Activated T-helper 2 cell treated with anti-CD3 and anti-CD28 coated beads, Interferon-gamma antibody, Interleukin-2, Interleukin-4, amounts not matched to agents 10 μg/mL and 5 μg/mL and 100 μg/mL, durations not matched to agents 14 hours and 24 hours and 36 hours (primary cell): ENCODE measurements at regions of chr9 and their contacts with region 1.

Region 1: DNA sequence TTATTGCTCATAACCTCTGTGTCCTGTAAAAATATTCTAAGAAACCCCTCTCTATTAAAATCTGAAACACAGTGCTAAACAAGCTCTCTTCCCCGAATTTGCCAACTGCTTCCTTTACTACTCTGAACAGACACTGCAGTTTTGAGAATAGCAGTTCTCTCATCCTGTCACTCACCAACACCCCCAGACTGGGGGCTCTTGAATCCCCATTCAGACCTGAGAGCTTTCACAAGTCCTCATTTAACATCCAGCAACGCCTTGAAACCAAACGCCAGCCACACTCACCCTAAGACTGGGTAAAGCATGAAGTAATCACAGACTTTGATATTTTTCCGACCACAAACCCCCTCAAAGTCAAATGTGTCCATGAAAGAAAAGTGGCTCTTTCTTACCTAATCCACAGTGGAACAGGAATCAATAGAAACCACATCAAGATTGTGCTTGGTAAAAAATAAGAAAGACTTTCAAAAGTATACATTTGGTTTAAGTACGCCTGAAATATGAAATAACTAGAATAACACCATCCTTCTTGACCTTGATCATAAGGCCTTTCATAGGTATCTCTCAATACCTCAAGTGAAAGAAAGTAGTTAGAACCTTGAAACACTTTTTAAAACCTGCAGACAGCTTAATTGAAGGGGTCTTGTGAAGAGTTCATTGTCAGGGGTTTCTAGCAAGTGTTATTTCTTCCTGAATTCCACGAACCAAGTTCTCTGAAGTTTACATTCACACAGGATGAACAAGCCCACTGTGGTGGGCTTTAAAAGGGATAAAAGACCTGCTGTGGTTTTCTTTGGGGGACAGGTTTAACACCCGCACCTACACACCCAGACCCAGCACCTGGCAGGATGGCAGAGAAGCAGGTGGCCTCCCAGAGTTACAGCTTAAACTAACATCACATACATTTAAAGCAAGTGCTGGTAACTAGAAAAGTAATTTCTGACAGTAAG is 412.6 kb downstream of the MLLT3 start:
- DNase-seq: peak; percentile 46
- H3K4me3 Mint-ChIP-seq: peak overlapping the region; percentile 23
- H3K27ac Mint-ChIP-seq: peak overlapping the region; percentile 84
- H3K4me1 Mint-ChIP-seq: peaks cover 31% of the 10 kb centered on the region
- H3K27me3 Mint-ChIP-seq: no peaks in the 10 kb centered on the region

Region 2: GRCh38 chr9:19976226-19976625 is 233.4 kb before region 1 on chr9:
- intact Hi-C with region 1: loop called (anchors 1 kb)
- DNase-seq: no peak
- H3K4me3 Mint-ChIP-seq: no peak overlapping the region
- H3K27ac Mint-ChIP-seq: peak overlapping the region; percentile 83
- H3K4me1 Mint-ChIP-seq: peaks cover 28% of the 10 kb centered on the region
- H3K27me3 Mint-ChIP-seq: no peaks in the 10 kb centered on the region

Region 3: GRCh38 chr9:20220286-20220685 is 10.6 kb after region 1 on chr9:
- intact Hi-C with region 1: no loop called
- DNase-seq: no peak
- H3K4me3 Mint-ChIP-seq: no peak overlapping the region
- H3K27ac Mint-ChIP-seq: no peak overlapping the region
- H3K4me1 Mint-ChIP-seq: peaks cover 26% of the 10 kb centered on the region
- H3K27me3 Mint-ChIP-seq: peaks cover 9% of the 10 kb centered on the region

Region 4: DNA sequence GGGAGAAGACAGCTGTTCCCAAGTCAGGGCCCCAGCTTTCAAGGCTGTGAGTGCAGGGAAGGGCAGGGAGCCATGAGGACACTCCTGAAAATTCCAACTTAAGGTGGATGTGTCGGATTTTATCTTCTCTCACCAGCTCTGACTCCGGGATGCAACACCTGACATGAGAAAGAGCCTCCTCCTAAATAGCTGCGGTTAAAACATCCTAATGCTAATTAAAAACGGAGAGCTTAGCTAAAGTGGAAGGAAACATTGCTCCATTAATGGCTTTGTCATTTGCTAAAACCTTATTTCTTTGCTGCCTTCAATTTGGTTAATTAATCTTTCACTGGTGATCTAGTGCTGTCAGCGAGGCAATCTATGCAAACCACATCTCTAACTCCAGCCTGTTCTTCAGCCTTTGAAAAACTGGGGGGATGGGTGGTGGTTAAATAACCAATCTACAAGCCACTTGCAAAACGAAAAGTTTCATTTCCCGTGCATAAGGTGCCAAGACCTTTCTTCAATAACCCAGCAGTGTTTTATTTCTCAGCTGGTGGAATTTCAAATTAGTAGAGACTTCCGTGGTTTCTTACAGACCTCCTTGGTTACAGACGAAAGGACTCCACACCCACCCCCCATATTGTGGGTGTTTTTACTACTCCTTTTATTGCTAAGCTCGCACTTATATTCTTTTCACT is 33.0 kb after region 1 on chr9:
- intact Hi-C with region 1: loop called (anchors 1 kb)
- DNase-seq: peak; percentile 50
- H3K4me3 Mint-ChIP-seq: peak overlapping the region; percentile 22
- H3K27ac Mint-ChIP-seq: no peak overlapping the region
- H3K4me1 Mint-ChIP-seq: peaks cover 37% of the 10 kb centered on the region
- H3K27me3 Mint-ChIP-seq: peaks cover 28% of the 10 kb centered on the region

Region 5: DNA sequence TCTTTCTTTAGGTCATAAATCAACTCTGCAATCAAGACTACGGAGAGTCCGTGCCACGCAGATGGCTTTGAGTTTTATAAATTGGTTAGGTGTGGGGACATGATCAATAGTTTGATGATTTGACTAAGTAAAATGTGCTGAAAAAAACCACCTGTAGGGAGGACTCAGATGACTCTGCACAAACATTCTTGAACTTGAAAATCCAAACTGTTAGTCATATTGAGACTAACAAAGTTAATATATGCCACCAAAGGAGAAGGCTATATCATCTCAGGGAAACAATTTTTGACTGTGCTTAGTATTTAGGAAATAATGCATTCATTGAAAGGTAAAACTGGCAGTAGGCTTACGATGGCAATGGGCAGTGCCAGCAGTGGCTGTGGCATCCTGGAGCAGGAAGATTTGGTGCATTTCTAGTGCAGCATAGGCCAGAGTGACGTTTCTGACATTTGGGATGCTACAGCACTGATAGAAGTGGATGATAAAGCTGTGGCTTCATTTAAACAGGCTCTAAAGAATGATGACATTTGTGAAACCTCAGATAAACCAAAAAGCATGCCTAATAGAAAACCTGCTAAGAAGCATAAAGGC is 121.5 kb after region 1 on chr9:
- intact Hi-C with region 1: loop called (anchors 1 kb)
- DNase-seq: no peak
- H3K4me3 Mint-ChIP-seq: no peak overlapping the region
- H3K27ac Mint-ChIP-seq: peak overlapping the region; percentile 21
- H3K4me1 Mint-ChIP-seq: peaks cover 31% of the 10 kb centered on the region
- H3K27me3 Mint-ChIP-seq: peaks cover 6% of the 10 kb centered on the region

Region 6: GRCh38 chr9:20570756-20571155 is 361.1 kb after region 1 on chr9:
- intact Hi-C with region 1: loop called (anchors 5 kb)
- DNase-seq: no peak
- H3K4me3 Mint-ChIP-seq: no peak overlapping the region
- H3K27ac Mint-ChIP-seq: no peak overlapping the region
- H3K4me1 Mint-ChIP-seq: peaks cover 48% of the 10 kb centered on the region
- H3K27me3 Mint-ChIP-seq: no peaks in the 10 kb centered on the region

Region 7: GRCh38 chr9:20941174-20941690 is 731.6 kb after region 1 on chr9:
- intact Hi-C with region 1: loop called (anchors 10 kb)
- DNase-seq: peak; percentile 40
- H3K4me3 Mint-ChIP-seq: no peak overlapping the region
- H3K27ac Mint-ChIP-seq: no peak overlapping the region
- H3K4me1 Mint-ChIP-seq: peaks cover 3% of the 10 kb centered on the region
- H3K27me3 Mint-ChIP-seq: no peaks in the 10 kb centered on the region

Region 8: GRCh38 chr9:21110708-21111576 is 901.3 kb after region 1 on chr9:
- intact Hi-C with region 1: loop called (anchors 10 kb)
- DNase-seq: no peak
- H3K4me3 Mint-ChIP-seq: no peak overlapping the region
- H3K27ac Mint-ChIP-seq: no peak overlapping the region
- H3K4me1 Mint-ChIP-seq: no peaks in the 10 kb centered on the region
- H3K27me3 Mint-ChIP-seq: peaks cover 27% of the 10 kb centered on the region